Activated naive CD4-positive, alpha-beta T cell treated with anti-CD3 and anti-CD28 coated beads, Interleukin-2, amount 10 ng/mL, durations not matched to agents 7 days and 5 days (primary cell): ENCODE measurements at regions of chr15 and their contacts with region 1.

Region 1: GRCh38 chr15:74373731-74374647 is 6.5 kb upstream of the CYP11A1 start:
- DNase-seq: peak; percentile 98
- H3K4me3 Mint-ChIP-seq: peak overlapping the region; percentile 81
- H3K27ac Mint-ChIP-seq: peak overlapping the region; percentile 84
- H3K4me1 Mint-ChIP-seq: peaks cover 22% of the 10 kb centered on the region
- H3K27me3 Mint-ChIP-seq: peaks cover 44% of the 10 kb centered on the region

Region 2: GRCh38 chr15:74433592-74434262 is 59.7 kb after region 1 on chr15 and contains the start of gene SEMA7A:
- CTCF ChIA-PET with region 1: interaction called, 145 read pairs
- DNase-seq: peak; percentile 88
- H3K4me3 Mint-ChIP-seq: peak within 1 kb of the TSS; percentile 74
- H3K27ac Mint-ChIP-seq: peak within 1 kb of the TSS; percentile 60
- H3K4me1 Mint-ChIP-seq: peaks cover 43% of the 10 kb centered on the region
- H3K27me3 Mint-ChIP-seq: peaks cover 22% of the 10 kb centered on the region

Region 3: GRCh38 chr15:74489518-74490338 is 115.7 kb after region 1 on chr15:
- CTCF ChIA-PET with region 1: interaction called, 16 read pairs
- DNase-seq: peak; percentile 85
- H3K4me3 Mint-ChIP-seq: peak overlapping the region; percentile 33
- H3K27ac Mint-ChIP-seq: peak overlapping the region; percentile 84
- H3K4me1 Mint-ChIP-seq: peaks cover 20% of the 10 kb centered on the region
- H3K27me3 Mint-ChIP-seq: no peaks in the 10 kb centered on the region

Region 4: GRCh38 chr15:74615508-74616365 is 241.7 kb after region 1 on chr15 and contains the start of gene CLK3:
- CTCF ChIA-PET with region 1: interaction called, 52 read pairs
- DNase-seq: peak; percentile 97
- H3K4me3 Mint-ChIP-seq: peak within 1 kb of the TSS; percentile 93
- H3K27ac Mint-ChIP-seq: peak within 1 kb of the TSS; percentile 99
- H3K4me1 Mint-ChIP-seq: peaks cover 49% of the 10 kb centered on the region
- H3K27me3 Mint-ChIP-seq: peaks cover 25% of the 10 kb centered on the region